CD4-positive, alpha-beta T cell (primary cell): ENCODE measurements at regions of chr20 and their contacts with region 1.

Region 1: DNA sequence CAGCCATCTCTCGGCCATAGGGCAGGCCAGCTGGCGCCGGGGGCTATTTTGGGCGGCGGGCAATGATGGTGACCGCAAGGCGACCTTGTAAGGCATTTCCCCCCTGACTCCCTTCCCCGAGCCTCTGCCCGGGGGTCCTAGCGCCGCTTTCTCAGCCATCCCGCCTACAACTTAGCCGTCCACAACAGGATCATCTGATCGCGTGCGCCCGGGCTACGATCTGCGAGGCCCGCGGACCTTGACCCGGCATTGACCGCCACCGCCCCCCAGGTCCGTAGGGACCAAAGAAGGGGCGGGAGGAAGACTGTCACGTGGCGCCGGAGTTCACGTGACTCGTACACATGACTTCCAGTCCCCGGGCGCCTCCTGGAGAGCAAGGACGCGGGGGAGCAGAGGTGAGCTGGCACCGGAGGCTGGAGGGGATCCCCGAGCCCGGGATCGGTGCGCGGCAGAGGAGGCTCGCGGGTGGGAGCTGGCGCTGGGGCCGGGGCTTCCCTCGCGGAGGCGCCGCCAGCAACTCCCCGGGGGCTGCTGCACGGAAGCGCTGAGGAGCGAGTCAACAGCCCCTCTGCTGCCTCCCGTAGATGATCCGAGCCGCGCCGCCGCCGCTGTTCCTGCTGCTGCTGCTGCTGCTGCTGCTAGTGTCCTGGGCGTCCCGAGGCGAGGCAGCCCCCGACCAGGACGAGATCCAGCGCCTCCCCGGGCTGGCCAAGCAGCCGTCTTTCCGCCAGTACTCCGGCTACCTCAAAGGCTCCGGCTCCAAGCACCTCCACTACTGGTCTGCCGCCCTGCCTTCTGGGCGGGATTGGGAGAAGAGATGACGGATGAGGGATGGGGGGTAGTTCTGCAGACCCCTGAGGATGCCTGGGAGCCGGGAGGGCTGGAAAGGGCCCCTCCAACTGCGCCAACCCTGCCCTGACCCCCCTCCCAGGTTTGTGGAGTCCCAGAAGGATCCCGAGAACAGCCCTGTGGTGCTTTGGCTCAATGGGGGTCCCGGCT is at the starts of genes CTSA and NEURL2:
- DNase-seq: peak; percentile 64 to 92 (median 76)
- ATAC-seq: peak; percentile 79
- H3K4me3 ChIP-seq: peak within 1 kb of the TSS; percentile 93
- H3K4me3 Mint-ChIP-seq: peak within 1 kb of the TSS; percentile 96
- H3K27ac ChIP-seq: peak within 1 kb of the TSS; percentile 50 to 65
- H3K27ac Mint-ChIP-seq: peak within 1 kb of the TSS; percentile 84
- H3K4me1 ChIP-seq: peaks cover 48% of the 10 kb centered on the region
- H3K4me1 Mint-ChIP-seq: peaks cover 51% of the 10 kb centered on the region
- H3K27me3 ChIP-seq: no peaks in the 10 kb centered on the region
- H3K27me3 Mint-ChIP-seq: no peaks in the 10 kb centered on the region
- CTCF ChIP-seq: no peak
- total RNA-seq, gene CTSA: 40.3 to 42.6 TPM
- total RNA-seq, gene NEURL2: 1.5 to 2.5 TPM

Region 2: GRCh38 chr20:45880988-45881788 is 10.1 kb before region 1 on chr20 and contains the start of gene ZSWIM1:
- CTCF ChIA-PET with region 1: interaction called, 4 read pairs
- POLR2A ChIA-PET with region 1: interaction called, 78 read pairs
- intact Hi-C with region 1: loop called in 1 of 2 experiments (anchors 1 kb)
- DNase-seq: peak; percentile 96 to 100 (median 99)
- ATAC-seq: peak; percentile 98
- H3K4me3 ChIP-seq: peak within 1 kb of the TSS; percentile 78
- H3K4me3 Mint-ChIP-seq: peak within 1 kb of the TSS; percentile 87
- H3K27ac ChIP-seq: peak within 1 kb of the TSS; percentile 79 to 82
- H3K27ac Mint-ChIP-seq: peak within 1 kb of the TSS; percentile 86
- H3K4me1 ChIP-seq: peaks cover 51% of the 10 kb centered on the region
- H3K4me1 Mint-ChIP-seq: peaks cover 42% of the 10 kb centered on the region
- H3K27me3 ChIP-seq: no peaks in the 10 kb centered on the region
- H3K27me3 Mint-ChIP-seq: no peaks in the 10 kb centered on the region
- CTCF ChIP-seq: no peak
- total RNA-seq, gene ZSWIM1: 9.3 to 10.7 TPM